Panc1 (cell line): ENCODE measurements at regions of chr3 and their contacts with region 1.

Region 1: GRCh38 chr3:156787001-156787400 is 39.2 kb upstream of the LEKR1 start:
- DNase-seq: no peak
- ATAC-seq: no peak
- H3K4me3 ChIP-seq: no peak overlapping the region
- H3K27ac ChIP-seq: no peak overlapping the region
- H3K4me1 ChIP-seq: peaks cover 16% of the 10 kb centered on the region
- H3K27me3 ChIP-seq: no peaks in the 10 kb centered on the region
- CTCF ChIP-seq: no peak

Region 2: GRCh38 chr3:156772581-156773206 is 14.3 kb before region 1 on chr3:
- CTCF ChIA-PET with region 1: no interaction called
- POLR2A ChIA-PET with region 1: no interaction called
- in situ Hi-C with region 1: no loop called
- intact Hi-C with region 1: no loop called
- DNase-seq: no peak
- ATAC-seq: no peak
- H3K4me3 ChIP-seq: no peak overlapping the region
- H3K27ac ChIP-seq: no peak overlapping the region
- H3K4me1 ChIP-seq: no peaks in the 10 kb centered on the region
- H3K27me3 ChIP-seq: no peaks in the 10 kb centered on the region
- CTCF ChIP-seq: no peak

Region 3: GRCh38 chr3:156803952-156804741 is 17.1 kb after region 1 on chr3:
- CTCF ChIA-PET with region 1: no interaction called
- POLR2A ChIA-PET with region 1: no interaction called
- in situ Hi-C with region 1: no loop called
- intact Hi-C with region 1: no loop called
- DNase-seq: no peak
- ATAC-seq: no peak
- H3K4me3 ChIP-seq: no peak overlapping the region
- H3K27ac ChIP-seq: no peak overlapping the region
- H3K4me1 ChIP-seq: no peaks in the 10 kb centered on the region
- H3K27me3 ChIP-seq: no peaks in the 10 kb centered on the region
- CTCF ChIP-seq: no peak

Region 4: GRCh38 chr3:156816800-156817645 is 30.0 kb after region 1 on chr3:
- CTCF ChIA-PET with region 1: no interaction called
- POLR2A ChIA-PET with region 1: no interaction called
- in situ Hi-C with region 1: no loop called
- intact Hi-C with region 1: no loop called
- DNase-seq: peak; percentile 83
- ATAC-seq: peak; percentile 88
- H3K4me3 ChIP-seq: peak overlapping the region; percentile 60 to 86
- H3K27ac ChIP-seq: peak overlapping the region; percentile 97
- H3K4me1 ChIP-seq: peaks cover 51% of the 10 kb centered on the region
- H3K27me3 ChIP-seq: no peaks in the 10 kb centered on the region
- CTCF ChIP-seq: peak; percentile 40

Region 5: GRCh38 chr3:156926551-156926950 is 139.6 kb after region 1 on chr3:
- CTCF ChIA-PET with region 1: no interaction called
- POLR2A ChIA-PET with region 1: interaction called, 15 read pairs
- in situ Hi-C with region 1: no loop called
- intact Hi-C with region 1: no loop called
- DNase-seq: no peak
- ATAC-seq: no peak
- H3K4me3 ChIP-seq: no peak overlapping the region
- H3K27ac ChIP-seq: no peak overlapping the region
- H3K4me1 ChIP-seq: no peaks in the 10 kb centered on the region
- H3K27me3 ChIP-seq: no peaks in the 10 kb centered on the region
- CTCF ChIP-seq: no peak